Aorta (tissue), 5 donors: ENCODE measurements at regions of chr14 and their contacts with region 1.

Region 1: GRCh38 chr14:58129212-58129611 is 22.8 kb downstream of the ARMH4 start:
- DNase-seq: no peak
- ATAC-seq: no peak
- H3K4me3 ChIP-seq: no peak overlapping the region
- H3K27ac ChIP-seq: no peak overlapping the region
- H3K4me1 ChIP-seq: peaks cover 3 to 6% of the 10 kb centered on the region in 2 donors
- H3K27me3 ChIP-seq: no peaks in the 10 kb centered on the region

Region 2: GRCh38 chr14:58166005-58166983 is 37.1 kb after region 1 on chr14:
- intact Hi-C with region 1: no loop called
- DNase-seq: peak; percentile 90 to 96
- ATAC-seq: peak; percentile 87
- H3K4me3 ChIP-seq: no peak overlapping the region
- H3K27ac ChIP-seq: no peak overlapping the region
- H3K4me1 ChIP-seq: no peaks in the 10 kb centered on the region
- H3K27me3 ChIP-seq: no peaks in the 10 kb centered on the region

Region 3: DNA sequence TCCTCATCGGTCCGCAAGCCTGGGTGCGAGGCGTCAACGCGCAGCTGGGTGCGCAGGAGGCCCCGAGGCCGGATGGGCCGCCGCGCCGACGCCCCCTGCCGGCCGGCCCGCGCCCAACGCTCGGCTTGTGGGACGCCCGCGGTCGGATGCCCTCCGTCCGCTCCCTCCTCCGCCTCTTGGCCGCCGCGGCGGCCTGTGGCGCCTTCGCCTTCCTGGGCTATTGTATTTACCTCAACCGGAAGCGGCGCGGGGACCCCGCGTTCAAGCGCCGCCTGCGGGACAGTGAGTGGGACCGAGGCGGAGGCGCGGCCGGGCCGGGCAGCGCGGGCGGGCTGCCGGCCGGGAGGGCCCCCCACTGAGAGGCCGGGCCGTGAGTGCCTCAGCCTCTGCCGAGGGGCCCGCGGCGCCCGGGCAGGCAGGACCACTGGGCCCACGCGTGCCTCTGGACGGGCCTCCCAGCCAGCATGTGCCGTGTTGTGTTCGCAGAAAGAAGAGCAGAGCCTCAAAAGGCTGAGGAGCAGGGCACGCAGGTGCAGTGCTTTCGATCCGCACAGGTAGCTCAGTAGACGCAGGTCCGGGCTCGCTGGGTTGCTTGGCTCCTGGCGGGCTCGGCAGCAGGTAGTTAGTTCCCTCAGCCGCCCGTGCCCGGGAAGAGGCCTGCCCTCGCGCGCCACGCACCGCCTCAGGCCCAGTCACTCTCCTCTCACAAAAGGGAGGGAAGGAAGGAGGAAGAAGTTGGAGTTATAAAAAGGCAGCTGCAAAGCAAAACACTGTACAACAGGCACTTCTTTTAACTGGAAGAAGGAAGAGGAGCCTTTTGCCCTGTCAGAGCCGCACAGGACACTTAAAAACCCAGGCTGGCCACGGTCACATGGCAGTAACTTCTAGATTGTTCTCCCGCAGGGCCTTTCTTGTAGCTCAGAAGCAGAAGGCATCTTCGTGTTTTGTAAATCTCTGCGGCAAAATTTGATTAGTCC is 266.9 kb after region 1 on chr14 and contains the start of gene TOMM20L:
- intact Hi-C with region 1: loop called in 1 of 2 experiments (anchors 10 kb)
- DNase-seq: peak; percentile 82 to 92
- ATAC-seq: peak; percentile 93
- H3K4me3 ChIP-seq: peak within 1 kb of the TSS; percentile 48 to 77
- H3K27ac ChIP-seq: peak within 1 kb of the TSS in 1 of 2 donors; percentile 41
- H3K4me1 ChIP-seq: no peaks in the 10 kb centered on the region
- H3K27me3 ChIP-seq: no peaks in the 10 kb centered on the region
- total RNA-seq, gene TOMM20L: not detected